GM10248 (cell line): ENCODE measurements at regions of chr17 and their contacts with region 1.

Region 1: DNA sequence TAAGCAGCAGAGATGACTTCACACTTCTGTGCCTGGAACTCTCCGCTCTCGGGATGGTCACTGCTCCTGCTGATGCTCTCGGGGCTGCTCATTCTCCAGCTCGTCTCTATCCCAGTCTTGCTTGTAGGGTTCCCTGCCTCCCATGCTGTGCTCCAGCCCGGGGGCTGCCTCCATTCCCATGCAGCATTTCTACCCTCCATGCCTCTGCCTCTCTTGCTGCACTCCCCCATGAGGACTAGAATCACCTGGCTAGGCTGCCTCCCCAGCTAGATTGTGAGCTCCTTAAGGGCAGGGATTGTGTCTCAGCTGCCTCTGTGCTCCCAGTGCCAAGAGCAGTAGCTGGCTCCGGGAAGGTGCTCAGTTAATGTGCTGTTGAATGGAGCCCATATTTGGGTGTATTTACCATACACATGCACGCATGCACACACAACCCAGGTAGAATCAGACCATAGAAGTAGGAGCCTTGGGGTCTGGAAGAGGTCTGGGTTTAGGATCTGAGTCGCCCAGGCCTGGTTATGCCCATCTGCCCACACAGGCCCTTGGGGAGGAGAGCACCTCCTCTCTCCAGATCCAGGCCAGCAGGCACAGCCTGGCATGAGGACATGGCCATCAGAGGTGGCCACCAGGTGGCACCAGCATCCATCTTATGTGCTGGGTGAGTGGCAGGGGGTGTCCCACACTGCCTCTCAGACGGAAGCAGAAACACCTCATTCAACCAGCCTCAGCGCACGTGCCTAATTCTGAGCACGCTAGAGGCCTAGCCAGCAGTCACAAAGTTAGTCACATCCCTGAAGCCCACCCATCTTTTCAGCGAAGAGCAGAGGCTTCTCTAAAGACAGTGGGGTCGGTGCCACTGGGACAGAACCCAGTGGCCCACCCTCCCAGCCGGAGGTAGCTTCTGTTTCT is 9.3 kb downstream of the GIT1 start:
- DNase-seq: peak; percentile 91
- CTCF ChIP-seq: peak; percentile 93

Region 2: DNA sequence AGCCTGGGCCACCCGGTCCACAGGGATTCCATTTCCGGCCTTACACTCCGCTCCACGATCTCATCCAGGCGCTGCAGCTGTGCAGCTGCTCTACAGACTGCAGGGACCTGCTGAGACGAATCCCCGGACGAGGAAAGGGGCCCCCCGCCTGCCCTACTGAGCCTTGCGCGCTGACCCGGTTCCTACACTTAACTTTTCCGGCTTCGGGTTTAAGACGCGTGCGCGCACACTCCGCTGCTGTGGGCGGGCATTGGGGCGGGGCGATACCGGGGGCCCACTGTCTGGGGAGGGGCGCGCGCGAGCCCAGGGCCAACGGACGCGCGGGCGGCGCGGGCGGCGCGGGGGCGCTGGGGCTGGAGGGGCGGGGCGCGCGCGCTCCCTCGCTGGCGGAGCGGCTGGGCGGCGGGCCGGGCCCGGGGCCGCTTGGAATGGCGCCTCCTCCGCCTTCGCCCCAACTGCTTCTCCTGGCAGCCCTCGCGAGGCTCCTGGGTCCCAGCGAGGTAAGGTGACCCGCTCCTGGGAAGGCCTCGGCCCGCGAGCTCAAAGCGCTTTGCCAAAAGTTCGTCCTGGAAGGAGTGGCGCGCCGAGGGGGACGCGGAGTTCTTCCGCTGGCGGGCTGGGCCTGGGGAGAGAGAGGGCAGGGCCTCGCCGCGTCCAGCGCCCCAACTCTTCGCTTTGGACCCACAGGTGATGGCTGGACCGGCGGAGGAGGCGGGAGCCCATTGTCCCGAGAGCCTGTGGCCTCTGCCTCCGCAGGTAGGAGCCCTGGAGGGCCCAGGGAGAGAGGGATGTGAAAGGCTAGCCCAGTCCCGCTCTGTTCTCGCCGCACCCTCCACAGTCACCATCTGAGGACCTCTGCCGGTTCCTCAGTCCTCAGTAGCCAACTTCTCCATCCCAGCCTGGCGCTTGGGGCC is 11.5 kb before region 1 on chr17 and contains the start of gene TP53I13:
- CTCF ChIA-PET with region 1: interaction called, 61 read pairs
- POLR2A ChIA-PET with region 1: interaction called, 3 read pairs
- DNase-seq: peak; percentile 89
- CTCF ChIP-seq: no peak

Region 3: DNA sequence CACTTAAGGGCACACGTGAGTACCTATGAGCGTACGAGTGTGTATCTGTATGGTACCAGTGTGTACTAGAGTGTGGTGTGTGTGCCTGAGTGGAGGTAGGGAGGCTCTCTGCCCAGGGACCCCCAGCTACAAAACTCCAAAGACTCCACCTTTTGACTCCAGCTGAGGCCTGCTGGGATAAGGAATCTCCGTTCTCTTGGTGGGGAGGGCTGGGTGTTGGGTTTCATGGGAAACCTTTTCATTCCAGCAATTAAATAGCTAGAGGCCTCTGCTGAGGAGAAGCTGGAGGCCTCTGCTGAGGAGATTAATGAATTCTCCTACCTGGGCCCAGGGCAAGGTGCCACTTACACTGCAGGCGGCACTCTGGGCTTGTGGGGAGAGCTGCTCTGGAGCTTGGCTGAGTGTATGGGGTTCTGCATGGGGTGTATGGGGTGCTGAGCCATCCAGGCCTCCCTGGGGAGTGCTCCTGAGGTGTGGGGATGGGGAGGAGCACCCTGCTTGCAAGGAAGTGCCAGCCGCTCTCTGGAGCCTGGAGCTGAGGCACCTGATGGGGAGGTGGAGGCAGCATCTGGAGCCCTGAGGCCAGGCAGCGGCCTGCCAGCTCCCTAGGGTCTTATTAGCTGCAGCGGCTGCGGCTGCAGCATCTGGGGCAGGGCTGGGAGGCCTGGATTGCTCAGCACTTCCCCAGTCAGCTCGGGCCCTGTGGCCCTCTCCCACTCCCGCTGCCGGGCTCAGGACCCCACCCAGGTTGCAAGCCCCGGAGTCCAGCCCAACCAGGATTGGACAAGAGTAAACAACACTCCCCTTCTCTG is 17.4 kb after region 1 on chr17:
- CTCF ChIA-PET with region 1: interaction called, 144 read pairs
- POLR2A ChIA-PET with region 1: no interaction called
- DNase-seq: no peak
- CTCF ChIP-seq: no peak

Region 4: DNA sequence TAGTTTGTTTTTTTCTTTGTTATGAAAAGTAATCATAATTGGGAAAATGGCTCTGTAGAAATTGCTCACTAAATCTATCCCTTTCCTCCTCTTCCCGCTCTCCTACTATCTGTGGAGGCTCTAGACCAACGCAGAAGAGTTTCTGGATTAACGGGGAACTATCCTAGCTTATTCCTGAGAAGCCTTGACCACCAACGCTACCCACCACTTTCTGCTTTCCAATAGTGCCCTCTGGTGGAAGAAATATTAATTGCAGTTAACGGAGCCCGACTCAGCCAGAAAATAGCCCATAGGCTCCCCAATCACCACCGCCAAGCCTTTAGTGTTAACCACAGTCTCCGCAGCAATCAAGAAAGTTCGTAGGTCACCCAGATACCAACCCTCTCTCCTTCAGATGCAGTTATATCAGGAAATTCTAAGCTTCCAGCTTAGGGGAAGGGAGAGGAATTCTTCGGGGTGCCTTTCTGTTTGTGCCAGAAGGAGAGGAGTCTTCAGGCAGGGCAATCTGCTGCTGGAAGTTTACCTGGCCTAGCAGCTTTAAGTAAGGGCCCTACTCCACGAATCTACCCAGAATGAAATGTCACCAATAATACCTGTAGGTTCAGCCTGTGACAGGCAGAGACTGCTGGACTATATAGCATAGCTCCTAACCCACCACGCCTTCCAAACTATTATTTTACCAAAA is 513.5 kb after region 1 on chr17:
- CTCF ChIA-PET with region 1: interaction called, 18 read pairs
- POLR2A ChIA-PET with region 1: no interaction called
- DNase-seq: peak; percentile 72
- CTCF ChIP-seq: peak; percentile 79

Region 5: GRCh38 chr17:30600049-30600829 is 1020.1 kb after region 1 on chr17:
- CTCF ChIA-PET with region 1: no interaction called
- POLR2A ChIA-PET with region 1: no interaction called
- DNase-seq: peak; percentile 84
- CTCF ChIP-seq: peak; percentile 55